Endothelial cell of umbilical vein (primary cell): ENCODE measurements at regions of chrX and their contacts with region 1.

Region 1: DNA sequence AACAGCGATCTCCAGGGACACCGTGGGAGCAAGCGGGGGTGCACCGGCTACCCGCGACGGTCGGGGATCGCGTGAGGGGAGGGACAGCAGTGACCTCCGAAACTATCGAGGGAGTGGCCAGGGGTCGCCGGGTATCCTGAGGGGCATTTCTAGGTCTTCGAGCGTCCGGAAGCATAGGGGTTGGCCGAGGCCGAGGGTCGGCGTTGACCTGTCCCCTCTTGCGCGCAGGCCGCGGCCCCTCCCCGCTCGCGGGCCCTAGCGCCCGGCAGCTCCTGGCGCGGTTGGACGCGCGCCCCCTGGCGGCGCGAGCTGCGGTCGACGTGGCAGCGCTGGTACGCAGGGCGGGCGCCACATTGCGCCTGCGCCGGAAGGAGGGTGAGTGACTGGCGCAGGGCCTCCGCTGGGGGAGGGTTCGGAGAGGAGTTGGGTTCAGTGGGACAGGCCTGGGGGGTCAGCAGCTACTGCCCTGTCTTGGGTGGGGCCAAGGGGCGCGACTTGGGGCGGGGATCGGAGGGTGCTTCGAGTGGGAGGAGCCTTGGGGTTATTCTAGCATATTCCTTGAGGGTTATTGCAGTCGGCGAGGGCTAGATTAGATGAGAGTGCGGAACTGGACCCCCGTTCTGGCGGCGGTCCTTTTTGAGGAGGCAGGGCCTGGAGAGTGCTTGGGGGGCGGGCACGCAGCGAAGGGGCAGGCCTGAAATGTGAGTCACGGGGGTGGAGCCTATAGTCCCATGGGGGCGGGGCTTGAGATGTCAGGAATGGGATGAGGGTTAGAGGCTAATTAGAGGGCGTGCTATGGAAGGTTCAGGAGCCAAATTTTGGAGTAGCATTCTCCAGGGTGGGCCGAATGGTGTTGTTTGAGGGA is 1.2 kb downstream of the MAGIX start:
- DNase-seq: peak; percentile 80
- H3K4me3 ChIP-seq: peak overlapping the region in 1 of 3 experiments; percentile 38
- H3K27ac ChIP-seq: peak overlapping the region; percentile 79
- H3K4me1 ChIP-seq: peaks cover 21% of the 10 kb centered on the region
- H3K27me3 ChIP-seq: no peaks in the 10 kb centered on the region
- CTCF ChIP-seq: peak; percentile 63 to 69
- POLR2A ChIP-seq: no peak

Region 2: DNA sequence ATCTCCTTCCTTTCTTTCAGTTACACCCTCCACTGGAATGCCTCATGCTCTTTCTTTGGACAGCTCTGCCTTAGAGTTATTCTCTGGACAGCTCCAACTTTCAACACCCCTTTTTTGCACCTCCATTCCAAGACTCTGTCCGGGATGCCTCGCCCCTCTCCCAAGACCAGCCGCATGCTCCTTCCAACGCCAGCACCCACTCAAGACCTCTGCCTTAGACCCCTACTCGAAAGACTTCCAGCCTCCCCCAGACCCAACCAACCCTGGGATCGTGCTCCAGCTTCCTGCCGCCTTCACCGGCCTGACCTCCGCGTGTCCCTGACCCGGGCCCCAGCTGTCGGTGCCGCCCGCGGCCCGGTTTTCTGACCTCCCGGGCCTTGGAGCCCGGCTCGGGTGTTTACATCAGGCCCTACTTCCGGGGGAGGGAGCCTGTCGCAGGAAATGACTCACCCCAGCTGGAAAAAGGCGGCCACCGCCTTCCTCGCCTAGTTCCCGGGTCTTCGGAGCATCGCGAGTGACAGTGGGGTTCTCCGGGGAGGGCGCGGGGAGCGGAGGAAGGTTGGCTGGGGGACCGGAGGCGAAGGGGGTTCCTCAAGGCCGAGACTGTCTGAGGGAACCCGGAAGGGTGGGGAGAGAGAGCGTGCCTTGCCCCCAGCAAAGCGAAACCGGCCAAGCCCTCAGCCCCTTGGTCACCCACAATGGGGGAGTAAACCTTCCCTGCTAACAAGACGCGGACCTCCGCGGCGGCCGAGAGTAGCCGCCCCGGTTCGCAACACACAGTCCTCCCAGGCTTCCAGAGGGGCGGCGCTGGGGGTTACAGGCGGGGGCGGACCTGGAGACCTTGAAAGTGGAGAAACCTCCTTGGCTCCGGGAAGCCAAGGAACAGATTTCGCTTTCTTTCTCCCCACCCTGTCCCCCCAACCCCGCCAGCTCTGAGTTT is 84.0 kb before region 1 on chrX and contains the start of gene WDR45:
- CTCF ChIA-PET with region 1: interaction called, 3 read pairs
- POLR2A ChIA-PET with region 1: no interaction called
- dilution Hi-C with region 1: no loop called
- intact Hi-C with region 1: loop called (anchors 2 kb)
- DNase-seq: peak; percentile 69
- H3K4me3 ChIP-seq: peak within 1 kb of the TSS; percentile 25 to 68 (median 31)
- H3K27ac ChIP-seq: peak within 1 kb of the TSS; percentile 54
- H3K4me1 ChIP-seq: peaks cover 2% of the 10 kb centered on the region
- H3K27me3 ChIP-seq: no peaks in the 10 kb centered on the region
- CTCF ChIP-seq: no peak
- POLR2A ChIP-seq: peak; percentile 49
- total RNA-seq, gene WDR45: 29.9 and 32.2 TPM in 2 replicates